ENCODE measurements at regions of chr15 and their contacts with region 1.

Region 1: GRCh38 chr15:53346583-53346982 is 412.9 kb downstream of the WDR72 start:
- DNase-seq: no peak

Region 2: GRCh38 chr15:53401503-53401902 is 54.9 kb after region 1 on chr15:
- intact Hi-C with region 1: loop called (anchors 10 kb)
- DNase-seq: no peak

Region 3: GRCh38 chr15:54594115-54594514 is 1247.5 kb after region 1 on chr15:
- intact Hi-C with region 1: no loop called
- DNase-seq: no peak

Measured in posterior cingulate gyrus (tissue), 11 donors.